PC-3 (cell line): ENCODE measurements at regions of chr13 and their contacts with region 1.

Region 1: GRCh38 chr13:44988973-44989817 is at the starts of genes GPALPP1 and NUFIP1:
- DNase-seq: peak; percentile 91
- ATAC-seq: peak; percentile 89
- H3K4me3 ChIP-seq: peak within 1 kb of the TSS; percentile 100
- H3K27ac ChIP-seq: peak within 1 kb of the TSS; percentile 53
- H3K4me1 ChIP-seq: peaks cover 12% of the 10 kb centered on the region
- H3K27me3 ChIP-seq: no peaks in the 10 kb centered on the region
- CTCF ChIP-seq: no peak
- total RNA-seq, gene GPALPP1: 5.0 and 17.0 TPM in 2 replicates
- total RNA-seq, gene NUFIP1: 2.5 and 4.0 TPM in 2 replicates

Region 2: GRCh38 chr13:44629465-44630183 is 359.6 kb before region 1 on chr13:
- CTCF ChIA-PET with region 1: no interaction called
- POLR2A ChIA-PET with region 1: no interaction called
- intact Hi-C with region 1: no loop called
- DNase-seq: peak; percentile 6
- ATAC-seq: no peak
- H3K4me3 ChIP-seq: no peak overlapping the region
- H3K27ac ChIP-seq: no peak overlapping the region
- H3K4me1 ChIP-seq: peaks cover 9% of the 10 kb centered on the region
- H3K27me3 ChIP-seq: no peaks in the 10 kb centered on the region
- CTCF ChIP-seq: no peak

Region 3: GRCh38 chr13:44643256-44643655 is 345.9 kb before region 1 on chr13:
- CTCF ChIA-PET with region 1: no interaction called
- POLR2A ChIA-PET with region 1: no interaction called
- intact Hi-C with region 1: no loop called
- DNase-seq: no peak
- ATAC-seq: no peak
- H3K4me3 ChIP-seq: no peak overlapping the region
- H3K27ac ChIP-seq: no peak overlapping the region
- H3K4me1 ChIP-seq: no peaks in the 10 kb centered on the region
- H3K27me3 ChIP-seq: no peaks in the 10 kb centered on the region
- CTCF ChIP-seq: no peak

Region 4: GRCh38 chr13:45109102-45109720 is 120.0 kb after region 1 on chr13:
- CTCF ChIA-PET with region 1: no interaction called
- POLR2A ChIA-PET with region 1: interaction called, 10 read pairs
- intact Hi-C with region 1: no loop called
- DNase-seq: no peak
- ATAC-seq: no peak
- H3K4me3 ChIP-seq: no peak overlapping the region
- H3K27ac ChIP-seq: no peak overlapping the region
- H3K4me1 ChIP-seq: no peaks in the 10 kb centered on the region
- H3K27me3 ChIP-seq: no peaks in the 10 kb centered on the region
- CTCF ChIP-seq: no peak

Region 5: DNA sequence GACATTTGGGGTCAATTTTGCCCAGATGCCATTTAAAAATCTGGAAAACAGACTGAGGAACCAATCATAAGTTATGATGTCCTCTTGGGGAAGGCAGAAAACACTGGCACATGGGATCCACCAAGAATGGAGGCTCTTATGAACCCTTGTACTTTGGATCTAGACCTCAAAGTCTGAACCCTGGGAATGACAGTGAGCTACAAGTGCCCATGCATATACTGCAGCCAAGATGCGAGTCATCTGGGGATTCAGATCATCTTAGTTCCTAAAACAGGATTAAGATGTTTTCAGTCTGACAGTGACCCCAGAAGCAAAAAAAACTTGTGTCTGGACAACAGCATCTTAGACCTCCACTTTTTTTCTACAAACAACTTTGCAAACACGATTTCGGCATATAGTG is 962.5 kb after region 1 on chr13:
- CTCF ChIA-PET with region 1: no interaction called
- POLR2A ChIA-PET with region 1: no interaction called
- intact Hi-C with region 1: no loop called
- DNase-seq: no peak
- ATAC-seq: no peak
- H3K4me3 ChIP-seq: no peak overlapping the region
- H3K27ac ChIP-seq: no peak overlapping the region
- H3K4me1 ChIP-seq: no peaks in the 10 kb centered on the region
- H3K27me3 ChIP-seq: no peaks in the 10 kb centered on the region
- CTCF ChIP-seq: no peak